Activated CD4-positive, alpha-beta T cell treated with anti-CD3 and anti-CD28 coated beads, Interleukin-2, amount 10 ng/mL, durations not matched to agents 7 days and 5 days (primary cell): ENCODE measurements at regions of chr19 and their contacts with region 1.

Region 1: DNA sequence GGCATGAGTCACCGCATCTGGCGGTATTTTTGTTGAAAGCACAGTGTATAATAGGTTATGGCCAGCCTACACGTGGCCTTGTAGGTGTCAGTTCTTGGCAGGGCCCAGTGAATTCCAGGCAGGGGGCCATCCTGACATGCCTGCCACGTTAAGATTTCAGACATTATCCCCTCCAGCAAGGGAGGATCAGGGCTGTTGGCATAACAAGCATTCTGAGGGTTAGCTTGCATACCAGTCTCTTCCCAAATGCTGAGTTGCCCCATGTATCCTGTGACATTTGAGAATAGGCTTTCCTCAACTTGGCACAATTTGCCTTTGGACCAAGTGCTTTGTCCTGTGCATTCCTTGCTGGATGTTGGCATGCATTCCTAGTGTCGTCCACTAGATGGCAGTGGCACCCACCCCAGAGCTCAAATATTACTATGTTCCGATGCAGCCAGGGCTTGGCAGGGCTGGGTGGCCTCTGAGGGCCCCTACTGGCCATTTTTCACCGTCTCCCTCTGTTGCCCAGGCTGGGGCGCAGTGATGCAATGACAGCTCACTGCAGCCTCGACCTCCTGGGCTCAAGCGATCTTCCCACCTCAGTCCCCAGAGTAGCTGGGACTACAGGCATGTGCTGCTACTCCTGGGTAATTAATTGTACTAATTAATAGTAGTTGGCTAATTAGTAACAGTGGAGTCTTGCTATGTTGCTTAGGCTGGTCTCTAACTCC is 31.2 kb downstream of the NLRP12 start:
- DNase-seq: peak; percentile 81
- H3K4me3 Mint-ChIP-seq: no peak overlapping the region
- H3K27ac Mint-ChIP-seq: no peak overlapping the region
- H3K4me1 Mint-ChIP-seq: no peaks in the 10 kb centered on the region
- H3K27me3 Mint-ChIP-seq: no peaks in the 10 kb centered on the region

Region 2: GRCh38 chr19:54024660-54025059 is 231.8 kb after region 1 on chr19:
- CTCF ChIA-PET with region 1: interaction called, 17 read pairs
- POLR2A ChIA-PET with region 1: no interaction called
- DNase-seq: no peak
- H3K4me3 Mint-ChIP-seq: no peak overlapping the region
- H3K27ac Mint-ChIP-seq: no peak overlapping the region
- H3K4me1 Mint-ChIP-seq: peaks cover 11% of the 10 kb centered on the region
- H3K27me3 Mint-ChIP-seq: peaks cover 18% of the 10 kb centered on the region

Region 3: DNA sequence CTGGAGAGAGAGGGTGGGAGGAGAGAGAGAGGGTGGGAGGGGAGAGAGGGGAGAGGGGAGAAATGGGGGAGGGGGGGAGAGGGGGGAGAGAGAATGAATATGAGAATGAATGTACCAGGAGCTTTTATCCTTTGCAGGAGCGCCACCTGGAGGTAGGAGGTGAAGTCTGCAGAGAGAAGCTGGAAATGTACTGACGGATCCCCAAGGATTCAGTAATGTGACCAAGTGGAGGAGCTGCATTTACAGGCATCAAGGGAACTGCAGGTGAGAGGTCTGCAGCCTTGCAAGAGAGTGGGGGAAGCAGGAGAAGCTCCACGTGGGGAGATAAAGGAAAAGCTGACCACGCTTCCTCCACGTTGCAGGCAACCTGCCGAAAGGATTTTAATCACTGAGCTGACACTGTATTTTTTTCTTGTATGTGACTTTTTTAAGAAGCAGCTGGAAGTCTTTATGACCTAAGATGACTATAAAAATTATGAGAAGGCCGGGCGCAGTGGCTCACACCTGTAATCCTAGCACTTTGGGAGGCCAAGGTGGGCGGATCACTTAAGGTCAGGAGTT is 237.1 kb after region 1 on chr19:
- CTCF ChIA-PET with region 1: interaction called, 17 read pairs
- POLR2A ChIA-PET with region 1: no interaction called
- DNase-seq: peak; percentile 66
- H3K4me3 Mint-ChIP-seq: no peak overlapping the region
- H3K27ac Mint-ChIP-seq: no peak overlapping the region
- H3K4me1 Mint-ChIP-seq: peaks cover 2% of the 10 kb centered on the region
- H3K27me3 Mint-ChIP-seq: peaks cover 15% of the 10 kb centered on the region